ENCODE measurements at regions of chr10 and their contacts with region 1.

Region 1: DNA sequence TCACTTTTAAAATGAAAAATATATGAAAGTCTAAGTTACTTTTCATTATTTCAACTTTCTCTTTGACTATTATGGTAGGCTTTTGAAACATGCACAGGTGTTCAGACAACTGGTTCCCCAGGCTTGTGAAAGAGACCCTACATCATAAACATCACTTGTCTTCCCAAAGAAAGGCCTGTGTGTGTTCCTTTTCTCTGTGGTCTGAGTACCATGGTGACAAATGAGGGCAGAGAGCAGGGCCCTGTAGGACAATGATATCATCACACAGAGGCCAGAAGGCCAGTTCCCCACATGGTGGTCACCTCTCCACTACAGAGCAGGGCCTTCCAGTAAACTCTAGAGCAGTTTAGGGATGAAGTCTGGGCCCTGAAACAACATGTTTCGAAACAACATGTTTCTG is 288.8 kb downstream of the USP6NL start:
- DNase-seq: no peak
- ATAC-seq: no peak
- H3K4me3 ChIP-seq: no peak overlapping the region
- H3K4me3 Mint-ChIP-seq: no peak overlapping the region
- H3K27ac ChIP-seq: peak overlapping the region in 1 of 2 experiments; percentile 38
- H3K27ac Mint-ChIP-seq: peak overlapping the region; percentile 57
- H3K4me1 ChIP-seq: peaks cover 13% of the 10 kb centered on the region
- H3K4me1 Mint-ChIP-seq: peaks cover 59% of the 10 kb centered on the region
- H3K27me3 ChIP-seq: no peaks in the 10 kb centered on the region
- H3K27me3 Mint-ChIP-seq: no peaks in the 10 kb centered on the region
- CTCF ChIP-seq: no peak

Region 2: DNA sequence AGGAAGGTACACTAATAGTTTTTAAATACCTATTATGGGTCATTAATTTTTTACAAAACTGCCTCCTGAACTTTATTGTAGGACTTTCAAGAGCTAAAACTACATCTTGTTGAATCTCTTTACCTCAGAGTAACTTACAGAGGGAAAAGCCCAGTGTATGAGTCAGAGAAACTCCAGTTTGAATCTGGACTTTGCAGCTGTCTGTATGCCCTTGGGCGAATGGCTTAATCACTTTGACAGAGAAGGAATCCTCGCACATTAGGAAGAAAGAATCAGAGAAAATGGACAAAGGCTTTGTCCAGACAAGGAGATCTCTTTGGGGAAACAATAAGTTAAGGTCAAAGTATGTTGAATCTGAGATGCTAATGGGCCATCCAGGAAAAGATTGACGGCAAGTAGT is 789.3 kb before region 1 on chr10:
- CTCF ChIA-PET with region 1: no interaction called
- POLR2A ChIA-PET with region 1: no interaction called
- intact Hi-C with region 1: no loop called
- DNase-seq: no peak
- ATAC-seq: no peak
- H3K4me3 ChIP-seq: no peak overlapping the region
- H3K4me3 Mint-ChIP-seq: no peak overlapping the region
- H3K27ac ChIP-seq: no peak overlapping the region
- H3K27ac Mint-ChIP-seq: no peak overlapping the region
- H3K4me1 ChIP-seq: no peaks in the 10 kb centered on the region
- H3K4me1 Mint-ChIP-seq: no peaks in the 10 kb centered on the region
- H3K27me3 ChIP-seq: no peaks in the 10 kb centered on the region
- H3K27me3 Mint-ChIP-seq: no peaks in the 10 kb centered on the region
- CTCF ChIP-seq: no peak

Region 3: GRCh38 chr10:11472158-11472753 is 149.6 kb after region 1 on chr10:
- CTCF ChIA-PET with region 1: no interaction called
- POLR2A ChIA-PET with region 1: no interaction called
- intact Hi-C with region 1: loop called in 1 of 2 experiments (anchors 5 kb)
- DNase-seq: peak; percentile 51 to 85 (median 70)
- ATAC-seq: peak; percentile 97
- H3K4me3 ChIP-seq: no peak overlapping the region
- H3K4me3 Mint-ChIP-seq: no peak overlapping the region
- H3K27ac ChIP-seq: no peak overlapping the region
- H3K27ac Mint-ChIP-seq: no peak overlapping the region
- H3K4me1 ChIP-seq: no peaks in the 10 kb centered on the region
- H3K4me1 Mint-ChIP-seq: peaks cover 1% of the 10 kb centered on the region
- H3K27me3 ChIP-seq: no peaks in the 10 kb centered on the region
- H3K27me3 Mint-ChIP-seq: no peaks in the 10 kb centered on the region
- CTCF ChIP-seq: peak; percentile 97